MCF 10A (cell line): ENCODE measurements at regions of chr12 and their contacts with region 1.

Region 1: GRCh38 chr12:52327052-52327829 is 6.0 kb upstream of the KRT83 start:
- DNase-seq: peak; percentile 98
- H3K4me3 Mint-ChIP-seq: no peak overlapping the region
- H3K27ac Mint-ChIP-seq: no peak overlapping the region
- H3K4me1 Mint-ChIP-seq: peaks cover 14% of the 10 kb centered on the region
- H3K27me3 Mint-ChIP-seq: no peaks in the 10 kb centered on the region
- CTCF ChIP-seq: peak; percentile 97

Region 2: GRCh38 chr12:51687614-51688013 is 639.6 kb before region 1 on chr12:
- CTCF ChIA-PET with region 1: no interaction called
- POLR2A ChIA-PET with region 1: no interaction called
- intact Hi-C with region 1: no loop called
- DNase-seq: peak; percentile 76
- H3K4me3 Mint-ChIP-seq: no peak overlapping the region
- H3K27ac Mint-ChIP-seq: peak overlapping the region; percentile 47
- H3K4me1 Mint-ChIP-seq: peaks cover 36% of the 10 kb centered on the region
- H3K27me3 Mint-ChIP-seq: peaks cover under 1% of the 10 kb centered on the region
- CTCF ChIP-seq: no peak

Region 3: DNA sequence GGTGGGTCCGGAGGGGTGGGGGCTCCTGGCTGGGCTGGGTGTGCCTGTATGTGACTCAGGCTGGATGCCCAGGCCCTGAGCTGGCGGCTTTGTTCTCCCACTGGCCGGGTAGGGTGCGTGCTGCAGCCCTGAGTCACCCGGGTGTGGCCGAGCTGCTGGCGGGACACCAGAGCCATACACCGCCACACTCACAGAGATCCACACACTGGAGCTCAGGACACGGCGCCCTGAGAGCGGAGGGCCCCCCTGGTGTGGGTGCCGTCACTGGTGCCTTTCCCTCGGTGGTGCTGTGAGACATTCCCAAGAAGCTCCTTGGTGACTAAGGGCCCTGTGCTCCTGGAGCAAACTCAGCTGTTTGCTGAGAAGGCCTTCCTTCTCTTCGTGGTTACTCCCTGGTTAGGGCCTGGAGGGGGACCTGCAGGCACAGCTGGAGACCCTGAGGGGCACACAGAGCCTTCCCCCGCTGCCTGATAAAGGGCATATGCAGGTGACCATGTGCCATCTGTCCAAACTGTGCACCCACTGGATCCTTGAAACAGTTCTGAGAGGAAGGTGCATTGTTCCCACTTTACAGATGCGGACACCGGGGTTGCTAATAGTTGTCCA is 179.8 kb before region 1 on chr12:
- CTCF ChIA-PET with region 1: interaction called, 10 read pairs
- POLR2A ChIA-PET with region 1: interaction called, 3 read pairs
- intact Hi-C with region 1: loop called (anchors 1 kb)
- DNase-seq: peak; percentile 98
- H3K4me3 Mint-ChIP-seq: peak overlapping the region; percentile 39
- H3K27ac Mint-ChIP-seq: peak overlapping the region; percentile 97
- H3K4me1 Mint-ChIP-seq: peaks cover 76% of the 10 kb centered on the region
- H3K27me3 Mint-ChIP-seq: no peaks in the 10 kb centered on the region
- CTCF ChIP-seq: no peak

Region 4: GRCh38 chr12:52230327-52231291 is 96.6 kb before region 1 on chr12:
- CTCF ChIA-PET with region 1: interaction called, 8 read pairs
- POLR2A ChIA-PET with region 1: interaction called, 3 read pairs
- intact Hi-C with region 1: loop called (anchors 1 kb)
- DNase-seq: peak; percentile 86
- H3K4me3 Mint-ChIP-seq: peak overlapping the region; percentile 91
- H3K27ac Mint-ChIP-seq: peak overlapping the region; percentile 91
- H3K4me1 Mint-ChIP-seq: peaks cover 54% of the 10 kb centered on the region
- H3K27me3 Mint-ChIP-seq: no peaks in the 10 kb centered on the region
- CTCF ChIP-seq: no peak

Region 5: GRCh38 chr12:52307836-52308805 is 19.1 kb before region 1 on chr12:
- CTCF ChIA-PET with region 1: interaction called, 25 read pairs
- POLR2A ChIA-PET with region 1: no interaction called
- intact Hi-C with region 1: no loop called
- DNase-seq: peak; percentile 30
- H3K4me3 Mint-ChIP-seq: peak overlapping the region; percentile 52
- H3K27ac Mint-ChIP-seq: peak overlapping the region; percentile 61
- H3K4me1 Mint-ChIP-seq: peaks cover 28% of the 10 kb centered on the region
- H3K27me3 Mint-ChIP-seq: peaks cover 25% of the 10 kb centered on the region
- CTCF ChIP-seq: no peak

Region 6: GRCh38 chr12:52870351-52871290 is 543.4 kb after region 1 on chr12:
- CTCF ChIA-PET with region 1: interaction called, 7 read pairs
- POLR2A ChIA-PET with region 1: no interaction called
- intact Hi-C with region 1: loop called (anchors 5 kb)
- DNase-seq: peak; percentile 84
- H3K4me3 Mint-ChIP-seq: peak overlapping the region; percentile 14
- H3K27ac Mint-ChIP-seq: peak overlapping the region; percentile 90
- H3K4me1 Mint-ChIP-seq: peaks cover 77% of the 10 kb centered on the region
- H3K27me3 Mint-ChIP-seq: no peaks in the 10 kb centered on the region
- CTCF ChIP-seq: peak; percentile 95